GM12878 (cell line): ENCODE measurements at regions of chr15 and their contacts with region 1.

Region 1: DNA sequence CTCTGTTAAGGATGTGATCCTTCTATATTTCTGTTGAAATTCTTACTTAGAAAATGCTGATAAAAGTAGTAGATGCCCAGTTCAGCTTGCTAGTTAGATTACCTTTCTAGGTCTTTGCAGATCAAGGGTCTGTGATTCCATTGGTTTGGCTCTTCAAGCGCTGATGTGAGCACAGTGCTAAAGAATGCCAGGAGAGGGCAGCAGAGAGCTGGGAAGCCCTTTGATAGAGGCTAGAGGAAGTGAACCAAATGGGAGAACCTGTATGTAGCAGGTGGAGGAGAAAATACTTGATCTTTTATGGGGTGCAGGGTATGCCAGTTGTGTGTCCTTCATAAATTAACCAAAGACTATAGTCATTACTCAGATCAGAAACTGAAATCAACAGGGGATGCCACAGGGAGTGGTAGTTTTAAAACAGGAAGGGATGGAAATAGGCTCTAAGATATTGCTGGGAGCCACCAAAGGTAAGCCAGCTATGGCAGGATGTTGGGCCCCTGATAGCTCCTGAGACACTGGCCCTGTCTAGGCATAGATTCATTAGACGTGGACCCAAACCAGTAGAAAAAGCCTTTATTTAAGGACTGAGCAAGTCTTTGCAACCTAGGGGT is 677.4 kb downstream of the SQOR start:
- DNase-seq: peak; percentile 11
- ATAC-seq: peak; percentile 94
- H3K4me3 ChIP-seq: no peak overlapping the region
- H3K27ac ChIP-seq: no peak overlapping the region
- H3K4me1 ChIP-seq: no peaks in the 10 kb centered on the region
- H3K27me3 ChIP-seq: no peaks in the 10 kb centered on the region
- CTCF ChIP-seq: peak; percentile 63 to 80 (median 67)
- EP300 ChIP-seq: no peak
- POLR2A ChIP-seq: no peak
- RAD21 ChIP-seq: peak; percentile 96

Region 2: GRCh38 chr15:46502668-46503067 is 190.4 kb after region 1 on chr15:
- CTCF ChIA-PET with region 1: interaction called, 14 read pairs
- POLR2A ChIA-PET with region 1: no interaction called
- RAD21 ChIA-PET with region 1: no interaction called
- SMC1A ChIA-PET with region 1: interaction called, 7 read pairs
- in situ Hi-C with region 1: no loop called
- intact Hi-C with region 1: no loop called
- DNase-seq: no peak
- ATAC-seq: no peak
- H3K4me3 ChIP-seq: no peak overlapping the region
- H3K27ac ChIP-seq: no peak overlapping the region
- H3K4me1 ChIP-seq: no peaks in the 10 kb centered on the region
- H3K27me3 ChIP-seq: no peaks in the 10 kb centered on the region
- CTCF ChIP-seq: no peak
- EP300 ChIP-seq: no peak
- POLR2A ChIP-seq: no peak
- RAD21 ChIP-seq: peak; percentile 16; the same call in 1 of the 2 replicates

Region 3: GRCh38 chr15:47027322-47027946 is 715.2 kb after region 1 on chr15:
- CTCF ChIA-PET with region 1: no interaction called
- POLR2A ChIA-PET with region 1: no interaction called
- RAD21 ChIA-PET with region 1: no interaction called
- SMC1A ChIA-PET with region 1: interaction called, 3 read pairs
- in situ Hi-C with region 1: no loop called
- intact Hi-C with region 1: loop called (anchors 10 kb)
- DNase-seq: no peak
- ATAC-seq: peak; percentile 50; the same call in 2 of the 3 replicates
- H3K4me3 ChIP-seq: no peak overlapping the region
- H3K27ac ChIP-seq: no peak overlapping the region
- H3K4me1 ChIP-seq: no peaks in the 10 kb centered on the region
- H3K27me3 ChIP-seq: no peaks in the 10 kb centered on the region
- CTCF ChIP-seq: peak in 2 of 3 experiments; percentile 15; a peak in 2 of 6 replicates
- EP300 ChIP-seq: no peak
- POLR2A ChIP-seq: no peak
- RAD21 ChIP-seq: peak; percentile 48